SK-N-SH (cell line): ENCODE measurements at regions of chr13 and their contacts with region 1.

Region 1: GRCh38 chr13:40922437-40923040 is 96.6 kb downstream of the ELF1 start:
- DNase-seq: no peak
- H3K4me3 ChIP-seq: no peak overlapping the region
- H3K27ac ChIP-seq: no peak overlapping the region
- H3K4me1 ChIP-seq: peaks cover 0 to 3% of the 10 kb centered on the region in 2 experiments; a peak in 2 of 4 replicates
- H3K27me3 ChIP-seq: no peaks in the 10 kb centered on the region
- CTCF ChIP-seq: no peak
- EP300 ChIP-seq: no peak
- RAD21 ChIP-seq: no peak

Region 2: DNA sequence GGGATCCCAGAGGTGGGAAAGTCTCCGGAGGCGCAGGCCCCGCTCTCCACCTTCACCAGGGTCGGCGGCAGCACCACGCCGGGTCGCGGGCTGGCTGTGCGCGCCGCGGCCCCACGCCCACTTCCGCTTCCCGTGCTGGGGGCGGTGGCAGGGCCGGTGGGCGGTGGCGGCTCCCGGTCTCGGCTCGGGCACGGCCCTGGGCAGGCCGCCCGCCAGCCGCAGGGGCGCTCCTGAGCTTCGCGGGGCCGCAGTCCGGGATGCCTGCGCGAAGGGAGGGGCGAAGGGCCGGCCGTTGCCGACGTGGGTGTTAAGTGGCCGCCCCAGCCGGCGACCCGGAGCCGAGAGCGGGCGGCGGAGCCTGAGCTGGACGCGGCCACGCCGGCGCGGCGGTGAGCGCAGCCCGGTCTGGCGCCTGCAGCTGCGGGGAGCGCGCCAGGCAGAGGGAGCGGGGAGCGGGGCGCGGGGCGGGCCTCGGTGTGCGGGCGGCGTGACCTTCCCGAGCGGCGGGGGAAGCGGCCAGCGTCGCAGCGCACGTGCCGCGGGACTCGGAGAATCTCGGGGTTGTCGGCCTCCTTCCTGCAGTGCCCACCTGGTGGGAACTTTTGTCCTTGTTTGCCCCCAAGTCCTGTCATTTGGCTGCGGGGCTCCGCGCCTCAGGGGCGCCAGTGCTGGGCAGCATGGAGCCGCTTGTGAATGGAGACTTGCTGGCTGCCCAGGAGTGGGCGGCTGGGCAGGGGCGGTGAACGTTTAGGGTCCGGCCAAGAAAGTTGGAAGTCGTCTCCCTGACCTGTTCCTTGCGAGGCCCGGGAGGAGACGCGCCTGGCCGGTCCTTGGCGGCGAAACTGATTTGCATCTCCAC is 133.0 kb before region 1 on chr13 and contains the start of gene SLC25A15:
- CTCF ChIA-PET with region 1: interaction called, 9 read pairs
- POLR2A ChIA-PET with region 1: interaction called, 13 read pairs
- DNase-seq: peak; percentile 97
- H3K4me3 ChIP-seq: peak within 1 kb of the TSS; percentile 70 to 83
- H3K27ac ChIP-seq: peak within 1 kb of the TSS; percentile 83 to 85
- H3K4me1 ChIP-seq: peaks cover 0 to 11% of the 10 kb centered on the region in 2 experiments; a peak in 1 of 4 replicates
- H3K27me3 ChIP-seq: no peaks in the 10 kb centered on the region
- CTCF ChIP-seq: no peak; the same call in 1 of the 2 replicates
- EP300 ChIP-seq: no peak
- RAD21 ChIP-seq: peak; percentile 60
- polyA plus RNA-seq, gene SLC25A15: 15.2 TPM in 2 replicates

Region 3: GRCh38 chr13:40910324-40911050 is 12.1 kb before region 1 on chr13:
- CTCF ChIA-PET with region 1: interaction called, 11 read pairs
- POLR2A ChIA-PET with region 1: no interaction called
- DNase-seq: no peak
- H3K4me3 ChIP-seq: peak overlapping the region in 1 of 2 experiments; percentile 26; a peak in 1 of 4 replicates
- H3K27ac ChIP-seq: peak overlapping the region; percentile 60 to 91
- H3K4me1 ChIP-seq: peaks cover 15 to 19% of the 10 kb centered on the region in 2 experiments
- H3K27me3 ChIP-seq: no peaks in the 10 kb centered on the region
- CTCF ChIP-seq: no peak
- EP300 ChIP-seq: no peak
- RAD21 ChIP-seq: no peak

Region 4: GRCh38 chr13:41145146-41145908 is 222.8 kb after region 1 on chr13:
- CTCF ChIA-PET with region 1: no interaction called
- POLR2A ChIA-PET with region 1: no interaction called
- DNase-seq: no peak
- H3K4me3 ChIP-seq: no peak overlapping the region
- H3K27ac ChIP-seq: no peak overlapping the region
- H3K4me1 ChIP-seq: no peaks in the 10 kb centered on the region
- H3K27me3 ChIP-seq: no peaks in the 10 kb centered on the region
- CTCF ChIP-seq: no peak
- EP300 ChIP-seq: no peak
- RAD21 ChIP-seq: no peak